ENCODE measurements at regions of chr14 and their contacts with region 1.

Region 1: DNA sequence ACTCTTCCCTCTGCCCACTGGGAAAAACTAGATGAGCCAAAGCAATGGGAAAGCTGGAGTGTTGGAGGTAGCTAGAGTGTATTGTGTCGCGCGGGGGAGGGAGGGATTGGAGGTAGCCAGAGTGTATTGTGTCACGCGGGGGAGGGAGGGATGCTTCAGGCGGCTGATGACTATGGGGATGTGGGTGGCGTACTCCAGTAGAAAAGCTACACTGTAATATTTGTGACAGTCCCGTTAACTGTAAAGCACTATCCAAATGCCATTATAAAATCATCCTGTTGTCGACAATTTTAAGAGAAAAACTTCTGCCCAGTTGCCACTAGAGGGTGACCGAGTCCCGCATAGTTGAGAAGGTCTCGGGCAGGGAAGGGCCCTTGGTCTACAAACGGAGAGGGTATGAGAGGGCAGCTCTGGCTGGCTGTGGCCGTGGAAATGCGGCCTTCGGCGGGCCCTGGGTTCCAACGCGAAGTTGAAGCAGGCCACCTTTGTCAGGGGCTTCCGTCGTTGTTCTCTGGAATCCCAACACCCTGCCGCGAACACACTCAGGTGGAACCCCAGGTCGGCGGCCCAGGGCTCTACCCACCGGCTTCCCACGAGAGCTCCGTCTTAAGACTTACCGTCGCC is 15.1 kb upstream of the PLEK2 start:
- DNase-seq: no peak
- ATAC-seq: peak; percentile 95
- H3K4me3 ChIP-seq: no peak overlapping the region
- H3K27ac ChIP-seq: no peak overlapping the region
- H3K4me1 ChIP-seq: no peaks in the 10 kb centered on the region
- H3K27me3 ChIP-seq: peaks cover 0 to 6% of the 10 kb centered on the region in 2 experiments; a peak in 2 of 4 replicates
- CTCF ChIP-seq: peak; percentile 84 to 90 (median 87)
- EP300 ChIP-seq: no peak
- POLR2A ChIP-seq: no peak
- RAD21 ChIP-seq: peak; percentile 99

Region 2: GRCh38 chr14:67514650-67515385 is 87.7 kb after region 1 on chr14:
- CTCF ChIA-PET with region 1: interaction called, 43 read pairs
- POLR2A ChIA-PET with region 1: no interaction called
- RAD21 ChIA-PET with region 1: interaction called, 3 read pairs
- SMC1A ChIA-PET with region 1: interaction called, 14 read pairs
- in situ Hi-C with region 1: no loop called
- intact Hi-C with region 1: no loop called
- DNase-seq: no peak
- ATAC-seq: peak; percentile 68
- H3K4me3 ChIP-seq: peak overlapping the region; percentile 85
- H3K27ac ChIP-seq: no peak overlapping the region
- H3K4me1 ChIP-seq: peaks cover 20% of the 10 kb centered on the region
- H3K27me3 ChIP-seq: no peaks in the 10 kb centered on the region; a peak in 2 of 4 replicates
- CTCF ChIP-seq: no peak
- EP300 ChIP-seq: no peak
- POLR2A ChIP-seq: no peak
- RAD21 ChIP-seq: no peak

Region 3: GRCh38 chr14:67532998-67533753 is 106.1 kb after region 1 on chr14 and contains the start of gene PLEKHH1:
- CTCF ChIA-PET with region 1: interaction called, 75 read pairs
- POLR2A ChIA-PET with region 1: no interaction called
- RAD21 ChIA-PET with region 1: interaction called, 25 read pairs
- SMC1A ChIA-PET with region 1: interaction called, 42 read pairs
- in situ Hi-C with region 1: no loop called
- intact Hi-C with region 1: no loop called
- DNase-seq: no peak
- ATAC-seq: peak; percentile 95
- H3K4me3 ChIP-seq: peak within 1 kb of the TSS; percentile 68
- H3K27ac ChIP-seq: no peak within 1 kb of the TSS
- H3K4me1 ChIP-seq: no peaks in the 10 kb centered on the region
- H3K27me3 ChIP-seq: peaks cover 0 to 15% of the 10 kb centered on the region in 2 experiments
- CTCF ChIP-seq: no peak
- EP300 ChIP-seq: no peak
- POLR2A ChIP-seq: no peak
- RAD21 ChIP-seq: no peak
- polyA plus RNA-seq, gene PLEKHH1: 0.11 to 0.22 TPM

Region 4: DNA sequence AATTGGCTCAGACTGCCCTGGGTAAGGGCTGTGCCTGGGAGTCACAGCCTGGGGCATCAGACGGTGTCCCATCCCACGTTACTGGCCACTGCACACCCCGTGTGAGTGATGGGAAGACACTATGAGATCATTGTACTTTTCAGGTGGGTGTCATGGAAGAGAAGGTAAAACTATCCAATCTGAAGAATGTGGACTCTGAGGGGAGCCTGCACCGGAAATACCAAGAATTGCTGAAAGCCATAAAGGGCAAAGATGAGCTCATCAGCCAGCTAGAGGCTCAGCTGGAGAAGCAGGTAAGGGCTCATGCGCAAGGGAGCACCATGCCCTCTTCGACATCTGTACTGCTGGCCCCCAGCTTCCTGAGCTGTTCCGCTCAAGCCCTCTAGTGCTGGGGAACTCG is 130.0 kb after region 1 on chr14:
- CTCF ChIA-PET with region 1: interaction called, 583 read pairs
- POLR2A ChIA-PET with region 1: no interaction called
- RAD21 ChIA-PET with region 1: interaction called, 6 read pairs
- SMC1A ChIA-PET with region 1: interaction called, 15 read pairs
- in situ Hi-C with region 1: no loop called
- intact Hi-C with region 1: no loop called
- DNase-seq: no peak
- ATAC-seq: no peak
- H3K4me3 ChIP-seq: no peak overlapping the region
- H3K27ac ChIP-seq: no peak overlapping the region
- H3K4me1 ChIP-seq: no peaks in the 10 kb centered on the region
- H3K27me3 ChIP-seq: no peaks in the 10 kb centered on the region; a peak in 1 of 4 replicates
- CTCF ChIP-seq: no peak
- EP300 ChIP-seq: no peak
- POLR2A ChIP-seq: no peak
- RAD21 ChIP-seq: no peak

Region 5: GRCh38 chr14:67583711-67584644 is 156.9 kb after region 1 on chr14:
- CTCF ChIA-PET with region 1: interaction called, 583 read pairs
- POLR2A ChIA-PET with region 1: no interaction called
- RAD21 ChIA-PET with region 1: interaction called, 4 read pairs
- SMC1A ChIA-PET with region 1: interaction called, 23 read pairs
- in situ Hi-C with region 1: no loop called
- intact Hi-C with region 1: no loop called
- DNase-seq: no peak
- ATAC-seq: peak; percentile 98
- H3K4me3 ChIP-seq: no peak overlapping the region
- H3K27ac ChIP-seq: no peak overlapping the region
- H3K4me1 ChIP-seq: no peaks in the 10 kb centered on the region
- H3K27me3 ChIP-seq: no peaks in the 10 kb centered on the region
- CTCF ChIP-seq: peak; percentile 77 to 83 (median 80)
- EP300 ChIP-seq: no peak
- POLR2A ChIP-seq: no peak
- RAD21 ChIP-seq: peak; percentile 96

Region 6: GRCh38 chr14:67619446-67620216 is 192.5 kb after region 1 on chr14 and contains the start of gene ARG2:
- CTCF ChIA-PET with region 1: interaction called, 7 read pairs
- POLR2A ChIA-PET with region 1: no interaction called
- RAD21 ChIA-PET with region 1: no interaction called
- SMC1A ChIA-PET with region 1: interaction called, 12 read pairs
- in situ Hi-C with region 1: no loop called
- intact Hi-C with region 1: no loop called
- DNase-seq: peak; percentile 65
- ATAC-seq: peak; percentile 97
- H3K4me3 ChIP-seq: peak within 1 kb of the TSS; percentile 82
- H3K27ac ChIP-seq: no peak within 1 kb of the TSS
- H3K4me1 ChIP-seq: peaks cover 5% of the 10 kb centered on the region; the same call in 1 of the 2 replicates
- H3K27me3 ChIP-seq: no peaks in the 10 kb centered on the region
- CTCF ChIP-seq: peak in 1 of 3 experiments; percentile 32; a peak in 1 of 6 replicates
- EP300 ChIP-seq: no peak
- POLR2A ChIP-seq: peak; percentile 56
- RAD21 ChIP-seq: no peak
- polyA plus RNA-seq, gene ARG2: 2.1 to 3.2 TPM